Heart left ventricle (tissue), 16 donors: ENCODE measurements at regions of chr14 and their contacts with region 1.

Region 1: GRCh38 chr14:21426692-21427091 is 29.2 kb downstream of the CHD8 start:
- DNase-seq: no peak
- ATAC-seq: no peak
- H3K4me3 ChIP-seq: no peak overlapping the region
- H3K27ac ChIP-seq: no peak overlapping the region
- H3K4me1 ChIP-seq: peaks cover 0 to 10% (median 5%) of the 10 kb centered on the region in 12 donors
- H3K27me3 ChIP-seq: no peaks in the 10 kb centered on the region
- CTCF ChIP-seq: no peak
- POLR2A ChIP-seq: no peak

Region 2: DNA sequence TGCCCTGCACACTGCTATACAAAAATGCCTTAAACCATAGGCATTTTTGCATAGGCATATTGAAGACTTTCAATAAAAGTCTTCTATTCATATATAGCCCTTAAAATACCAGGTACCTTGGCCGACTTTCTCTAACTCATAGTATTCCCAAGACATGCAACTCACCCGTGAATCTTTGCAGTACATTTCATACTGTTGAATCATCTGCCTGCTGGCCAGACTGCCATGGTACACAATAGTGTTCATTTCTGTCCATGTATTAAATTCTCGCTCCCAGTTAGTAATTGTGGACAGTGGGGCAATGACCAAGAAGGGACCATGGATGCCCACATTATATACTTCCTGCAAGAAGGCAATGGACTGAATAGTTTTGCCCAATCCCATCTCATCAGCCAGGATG is 18.5 kb before region 1 on chr14:
- intact Hi-C with region 1: loop called in 1 of 10 experiments (anchors 1 kb)
- DNase-seq: no peak
- ATAC-seq: no peak
- H3K4me3 ChIP-seq: no peak overlapping the region
- H3K27ac ChIP-seq: no peak overlapping the region
- H3K4me1 ChIP-seq: no peaks in the 10 kb centered on the region
- H3K27me3 ChIP-seq: no peaks in the 10 kb centered on the region
- CTCF ChIP-seq: no peak
- POLR2A ChIP-seq: no peak

Region 3: GRCh38 chr14:21643407-21643806 is 216.7 kb after region 1 on chr14:
- intact Hi-C with region 1: no loop called
- DNase-seq: no peak
- ATAC-seq: no peak
- H3K4me3 ChIP-seq: no peak overlapping the region
- H3K27ac ChIP-seq: no peak overlapping the region
- H3K4me1 ChIP-seq: no peaks in the 10 kb centered on the region
- H3K27me3 ChIP-seq: peaks cover 0 to 10% (median 0%) of the 10 kb centered on the region in 9 donors
- CTCF ChIP-seq: no peak
- POLR2A ChIP-seq: no peak